GM10248 (cell line): ENCODE measurements at regions of chr4 and their contacts with region 1.

Region 1: GRCh38 chr4:154506253-154506652 is 14.7 kb upstream of the DCHS2 start:
- DNase-seq: peak; percentile 18
- CTCF ChIP-seq: peak; percentile 54

Region 2: DNA sequence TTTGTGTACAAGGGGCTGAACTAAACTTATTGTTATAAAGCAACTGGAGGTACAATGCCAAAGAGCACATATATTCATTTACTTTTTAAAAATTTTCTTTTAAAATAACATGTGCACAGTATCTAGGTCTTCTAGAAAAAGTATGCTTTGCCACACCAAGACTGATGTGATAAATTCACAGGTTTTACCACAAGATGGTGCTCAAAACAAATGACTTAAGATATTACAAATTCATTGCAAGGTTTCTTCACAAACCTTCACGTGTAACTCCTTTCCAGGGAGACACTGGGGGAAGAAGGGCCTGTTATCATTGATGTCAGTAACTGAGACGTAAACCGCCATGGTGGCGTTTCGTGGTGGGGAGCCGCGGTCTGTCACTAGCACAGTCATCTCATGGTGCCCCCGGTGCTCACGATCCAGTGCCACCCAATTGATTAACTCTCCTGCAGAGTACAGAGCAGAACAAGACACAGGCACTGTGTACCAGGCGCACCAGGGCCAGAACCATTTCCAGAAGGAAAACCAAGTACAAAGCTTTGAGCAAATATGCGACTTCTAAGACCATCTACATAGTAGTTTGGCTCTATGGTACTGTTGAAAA is 176.9 kb before region 1 on chr4:
- CTCF ChIA-PET with region 1: interaction called, 19 read pairs
- POLR2A ChIA-PET with region 1: no interaction called
- DNase-seq: peak; percentile 14
- CTCF ChIP-seq: peak; percentile 32

Region 3: DNA sequence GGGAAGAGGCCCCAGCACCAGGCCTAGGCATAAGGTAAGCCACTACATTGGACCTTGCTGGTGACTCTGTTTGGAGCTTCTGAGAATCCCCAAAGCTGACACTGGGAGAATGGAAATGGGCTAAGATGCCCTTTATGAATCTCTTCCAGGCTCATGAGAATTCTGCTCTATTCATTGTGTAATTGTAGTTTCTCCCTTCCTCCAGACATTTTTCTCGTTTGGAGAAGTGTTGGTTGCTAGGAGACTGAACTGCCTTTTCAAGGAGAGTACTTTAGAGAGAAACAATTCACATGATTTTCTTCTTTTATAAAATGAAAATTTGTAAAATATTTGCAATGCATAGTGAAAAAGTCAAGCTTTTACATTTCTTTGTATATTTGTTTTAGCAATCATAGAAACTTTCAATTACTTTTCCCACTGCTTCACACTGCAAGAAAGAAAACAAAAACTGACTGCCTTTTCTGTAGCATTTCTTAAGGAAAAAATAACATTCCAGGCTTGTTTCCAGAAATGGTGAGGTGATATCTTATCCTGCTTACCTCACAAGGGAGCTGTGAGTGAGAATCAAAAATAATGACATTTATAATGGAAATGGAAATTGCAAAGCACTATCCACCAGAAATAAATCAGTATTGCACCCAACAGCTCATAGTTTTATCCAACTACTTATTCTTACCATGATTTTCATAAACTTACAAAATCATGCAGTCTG is 10.2 kb after region 1 on chr4:
- CTCF ChIA-PET with region 1: interaction called, 30 read pairs
- POLR2A ChIA-PET with region 1: no interaction called
- DNase-seq: no peak
- CTCF ChIP-seq: no peak

Region 4: DNA sequence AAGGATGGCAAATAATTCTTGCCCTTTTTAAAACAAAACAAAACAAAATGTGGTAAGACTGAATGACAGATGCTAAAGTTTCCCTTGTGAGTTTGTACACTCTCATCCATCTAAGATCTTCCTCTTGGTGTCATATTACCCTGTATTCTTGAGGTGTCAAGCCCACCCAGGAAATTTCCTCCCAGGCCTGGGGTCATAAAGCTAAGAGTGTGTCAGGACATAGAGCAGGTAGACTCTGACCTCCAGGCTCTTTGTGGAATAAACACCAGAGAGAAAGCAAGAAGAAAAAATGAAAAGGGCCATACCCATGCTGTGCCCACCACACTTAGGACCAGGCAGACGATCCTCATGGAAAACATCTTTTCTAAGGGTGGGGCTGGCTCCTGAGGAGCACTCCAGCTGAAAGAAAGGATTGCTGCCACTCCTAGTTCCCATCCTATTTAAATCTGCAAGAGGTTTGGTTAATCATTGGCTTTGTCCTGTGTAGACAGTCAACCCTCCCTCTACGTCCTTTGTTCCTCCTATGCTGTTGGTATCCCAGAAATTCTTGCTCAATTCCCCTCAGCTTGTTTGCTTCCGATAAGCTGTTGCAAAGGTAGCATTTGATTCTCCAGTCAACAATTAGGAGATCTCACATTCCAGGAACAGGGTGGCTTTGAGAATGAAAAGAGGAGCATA is 84.2 kb after region 1 on chr4 and contains the start of gene FGA:
- CTCF ChIA-PET with region 1: no interaction called
- POLR2A ChIA-PET with region 1: no interaction called
- DNase-seq: no peak
- CTCF ChIP-seq: no peak

Region 5: DNA sequence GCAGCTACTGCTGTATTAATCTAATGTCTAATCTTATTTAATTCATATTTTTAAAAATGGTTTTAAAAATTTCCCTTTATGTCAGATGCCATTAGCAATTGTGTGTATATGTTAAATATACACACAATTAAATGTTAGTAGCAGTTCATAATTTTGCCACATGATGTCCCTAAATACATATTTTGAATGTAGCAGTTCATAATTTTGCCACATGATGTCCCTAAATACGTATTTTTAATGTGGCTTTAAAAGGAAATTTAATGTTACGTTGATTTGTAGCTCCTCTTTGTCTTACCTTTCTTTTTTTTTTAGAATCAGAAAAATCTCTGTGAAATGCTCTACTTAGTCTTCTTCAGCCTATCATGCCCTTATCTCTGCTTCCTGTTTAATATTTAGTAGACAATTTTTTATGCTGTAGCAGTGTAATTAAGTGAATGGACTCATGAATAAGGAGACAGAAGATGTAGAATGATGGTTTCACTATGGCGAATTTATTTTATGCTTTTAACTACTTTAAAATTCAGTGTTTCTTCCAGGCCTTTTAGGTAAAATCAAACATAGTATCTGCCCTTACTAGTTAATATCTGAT is 300.9 kb after region 1 on chr4:
- CTCF ChIA-PET with region 1: no interaction called
- POLR2A ChIA-PET with region 1: no interaction called
- DNase-seq: no peak
- CTCF ChIP-seq: peak; percentile 60